GM18951 (cell line): ENCODE measurements at regions of chr12 and their contacts with region 1.

Region 1: DNA sequence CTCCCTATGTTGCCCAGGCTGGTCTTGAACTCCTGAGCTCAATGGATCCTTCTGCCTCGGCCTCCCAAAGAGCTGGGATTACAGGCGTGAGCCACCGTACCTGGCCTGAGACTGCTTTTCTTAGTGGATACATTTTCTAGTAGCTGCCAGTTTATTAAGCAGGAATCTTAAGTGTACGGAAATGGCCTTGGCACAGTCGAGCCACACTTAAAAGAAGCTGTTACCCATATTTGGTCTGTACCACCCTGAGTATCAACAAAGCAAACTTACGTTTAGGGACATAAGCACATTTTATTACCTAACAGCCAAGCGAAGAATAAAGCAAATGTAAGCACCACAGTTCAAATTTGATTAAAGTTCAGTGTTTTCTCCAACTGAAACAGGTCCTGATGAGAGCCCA is 50.7 kb upstream of the NR2C1 start:
- POLR2A ChIP-seq: no peak

Region 2: DNA sequence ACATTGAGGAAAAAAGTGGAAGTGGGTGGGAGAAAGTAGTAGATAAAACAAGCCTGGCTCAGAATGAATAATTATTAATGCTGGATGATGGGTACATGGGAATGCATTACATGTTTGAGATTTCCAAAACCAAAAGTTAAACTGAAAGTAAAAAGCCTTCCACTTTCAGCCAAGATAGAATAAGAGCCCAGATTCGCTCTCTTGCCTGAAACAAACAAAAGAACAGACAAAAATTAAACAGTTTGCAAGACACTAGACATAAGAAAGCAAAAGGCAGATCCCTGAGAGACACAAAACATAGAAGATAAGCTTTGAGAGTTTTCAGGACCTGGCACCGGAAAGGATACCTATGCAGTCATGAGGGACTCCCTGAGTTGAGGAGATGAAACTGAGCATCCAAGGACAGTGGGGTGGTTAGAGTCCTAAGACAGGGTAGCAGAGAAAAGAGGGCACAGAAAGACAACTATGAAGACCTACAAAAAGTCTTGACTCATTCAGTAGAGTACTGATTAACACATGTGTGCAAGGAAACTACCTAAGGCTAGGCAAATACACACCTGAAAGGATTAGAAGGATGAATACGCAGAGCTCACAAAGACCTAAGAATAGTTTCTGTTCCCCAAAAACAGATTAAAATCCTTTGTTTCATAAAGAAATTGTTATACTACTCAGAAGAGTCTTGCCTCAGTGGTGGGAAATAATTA is 718.5 kb before region 1 on chr12:
- in situ Hi-C with region 1: no loop called
- POLR2A ChIP-seq: no peak

Region 3: GRCh38 chr12:95173392-95174251 is 49.5 kb after region 1 on chr12:
- in situ Hi-C with region 1: no loop called
- POLR2A ChIP-seq: no peak

Region 4: GRCh38 chr12:95368931-95369330 is 244.8 kb after region 1 on chr12:
- in situ Hi-C with region 1: no loop called
- POLR2A ChIP-seq: no peak

Region 5: GRCh38 chr12:95532851-95533250 is 408.7 kb after region 1 on chr12:
- in situ Hi-C with region 1: loop called (anchors 10 kb)
- POLR2A ChIP-seq: no peak

Region 6: DNA sequence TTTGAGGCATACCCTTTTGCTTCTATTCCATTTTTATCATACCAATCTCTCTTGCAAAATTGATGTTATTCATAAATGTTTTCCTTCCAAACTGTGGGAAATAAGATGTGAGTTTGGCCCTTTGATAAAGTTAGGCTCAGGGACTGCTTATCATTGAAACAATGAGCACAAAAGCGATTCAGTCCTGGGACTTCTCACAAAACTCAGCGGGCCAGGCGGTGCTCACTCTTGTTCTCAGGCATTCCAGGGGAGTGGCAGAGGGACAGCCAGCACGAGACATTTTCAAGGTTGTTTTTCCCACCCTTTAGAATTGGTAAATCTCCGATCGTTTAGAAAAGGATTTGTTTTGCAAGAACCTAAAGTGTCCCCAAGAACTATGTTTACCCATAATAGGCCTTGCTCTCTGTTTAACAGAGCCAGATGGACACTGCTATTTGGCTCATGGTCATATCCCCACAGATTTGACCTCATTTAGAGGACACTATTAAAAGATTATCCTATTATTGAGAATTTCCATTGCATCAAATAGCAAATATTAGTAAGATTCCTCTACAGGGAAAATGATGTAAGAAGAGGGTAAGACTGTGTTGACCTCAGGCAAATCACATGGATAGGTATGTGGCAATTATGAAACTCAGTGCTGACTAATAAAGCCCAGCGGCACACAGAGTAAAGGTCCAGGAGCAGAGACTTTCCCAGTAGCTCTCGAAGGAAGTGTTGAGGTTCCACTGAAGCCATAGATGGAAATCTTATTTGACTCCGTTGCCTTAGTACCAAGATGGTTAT is 529.8 kb after region 1 on chr12:
- in situ Hi-C with region 1: no loop called
- POLR2A ChIP-seq: no peak